OCI-LY7 (cell line): ENCODE measurements at regions of chr16 and their contacts with region 1.

Region 1: GRCh38 chr16:67561824-67562525 is 351 bp upstream of the CTCF start:
- DNase-seq: peak; percentile 98
- H3K4me3 ChIP-seq: peak overlapping the region; percentile 84
- H3K27ac ChIP-seq: peak overlapping the region; percentile 95
- H3K4me1 ChIP-seq: peaks cover 65% of the 10 kb centered on the region
- CTCF ChIP-seq: no peak

Region 2: DNA sequence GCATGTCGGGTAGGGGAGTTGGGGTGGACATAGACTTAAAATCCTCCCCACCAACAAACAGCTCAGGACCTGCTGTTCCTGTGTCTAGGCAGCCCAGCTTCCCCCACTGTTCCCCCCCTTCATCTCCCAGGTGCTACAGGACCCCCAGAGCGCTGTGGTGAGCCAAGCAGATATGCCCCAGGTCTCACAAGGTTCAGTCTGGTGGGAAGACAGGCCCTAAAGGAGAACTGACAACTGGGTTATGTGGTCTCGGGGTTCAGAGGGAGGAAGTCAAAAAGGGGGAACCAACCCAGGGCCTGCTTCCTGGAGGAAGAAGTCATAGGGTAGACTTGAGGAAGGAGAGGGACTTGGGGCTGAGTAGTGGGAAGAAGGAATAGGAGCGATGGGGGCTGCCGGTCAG is 30.8 kb before region 1 on chr16:
- CTCF ChIA-PET with region 1: no interaction called
- POLR2A ChIA-PET with region 1: interaction called, 13 read pairs
- intact Hi-C with region 1: no loop called
- DNase-seq: peak; percentile 33
- H3K4me3 ChIP-seq: no peak overlapping the region
- H3K27ac ChIP-seq: peak overlapping the region; percentile 34
- H3K4me1 ChIP-seq: peaks cover 50% of the 10 kb centered on the region
- CTCF ChIP-seq: no peak

Region 3: DNA sequence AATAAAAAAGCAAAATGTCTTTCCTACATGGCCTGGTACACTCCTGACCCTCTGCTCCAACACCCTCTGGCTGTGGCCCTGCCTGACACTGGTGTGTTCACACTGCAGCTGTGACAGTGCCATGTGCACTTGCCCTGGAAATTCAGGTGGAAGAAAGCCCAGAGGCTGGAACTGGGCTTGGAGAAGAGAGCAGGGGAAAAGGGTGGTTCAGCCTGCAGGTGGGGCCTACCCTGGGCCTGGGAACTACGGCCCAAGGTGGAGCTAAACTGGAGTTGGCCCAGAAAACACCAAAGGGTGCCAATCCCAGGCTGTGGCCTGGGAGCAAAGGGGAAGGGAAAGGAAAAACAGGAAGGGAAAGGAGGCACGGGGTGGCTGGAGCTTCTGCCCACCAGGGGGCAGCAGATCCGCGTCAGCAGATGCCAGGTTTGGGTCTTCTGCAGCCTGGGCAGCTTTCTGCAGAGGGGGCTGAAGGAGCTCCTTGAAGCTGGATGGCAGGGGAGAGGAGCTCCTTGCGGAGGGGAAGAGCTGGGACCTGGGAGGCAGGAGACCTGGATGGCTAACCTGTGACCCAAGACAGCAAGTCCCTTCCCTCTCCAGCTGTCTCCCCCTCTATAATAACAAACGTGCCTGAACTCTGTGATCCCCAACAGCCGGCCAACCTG is 15.1 kb before region 1 on chr16:
- CTCF ChIA-PET with region 1: interaction called, 42 read pairs
- POLR2A ChIA-PET with region 1: interaction called, 251 read pairs
- intact Hi-C with region 1: loop called (anchors 1 kb)
- DNase-seq: peak; percentile 90
- H3K4me3 ChIP-seq: peak overlapping the region; percentile 64
- H3K27ac ChIP-seq: peak overlapping the region; percentile 98
- H3K4me1 ChIP-seq: peaks cover 96% of the 10 kb centered on the region
- CTCF ChIP-seq: peak; percentile 97

Region 4: GRCh38 chr16:67641779-67642708 is 80.1 kb after region 1 on chr16:
- CTCF ChIA-PET with region 1: interaction called, 9 read pairs
- POLR2A ChIA-PET with region 1: interaction called, 6 read pairs
- intact Hi-C with region 1: loop called (anchors 1 kb)
- DNase-seq: no peak
- H3K4me3 ChIP-seq: no peak overlapping the region
- H3K27ac ChIP-seq: no peak overlapping the region
- H3K4me1 ChIP-seq: peaks cover 25% of the 10 kb centered on the region
- CTCF ChIP-seq: no peak

Region 5: DNA sequence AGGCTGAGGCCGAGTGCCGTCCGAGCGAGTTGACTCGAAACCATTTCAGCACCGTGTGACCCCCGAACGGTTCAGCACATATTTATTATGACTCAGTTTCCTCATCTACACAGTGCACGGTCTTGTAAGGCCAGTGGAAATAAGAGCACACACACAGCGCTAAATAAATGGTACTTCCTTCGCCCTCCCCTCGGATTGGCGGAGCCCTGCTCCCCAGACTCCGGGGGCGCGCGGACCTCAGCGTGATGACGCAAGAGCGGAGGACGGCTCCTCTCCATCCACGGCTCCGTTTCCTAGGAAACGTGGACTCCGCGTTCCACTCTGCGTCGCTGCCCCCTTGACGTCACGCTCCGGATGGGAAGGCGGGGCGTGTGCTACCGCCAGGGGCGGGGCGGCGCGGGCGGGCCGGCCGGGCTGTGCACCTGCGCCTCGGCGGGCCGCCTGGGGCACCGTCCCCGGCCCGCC is 98.6 kb after region 1 on chr16 and contains the start of gene PARD6A:
- CTCF ChIA-PET with region 1: no interaction called
- POLR2A ChIA-PET with region 1: interaction called, 7 read pairs
- intact Hi-C with region 1: loop called (anchors 1 kb)
- DNase-seq: peak; percentile 100
- H3K4me3 ChIP-seq: peak within 1 kb of the TSS; percentile 83
- H3K27ac ChIP-seq: peak within 1 kb of the TSS; percentile 81
- H3K4me1 ChIP-seq: peaks cover 15% of the 10 kb centered on the region
- CTCF ChIP-seq: no peak
- total RNA-seq, gene PARD6A: 12.3 and 23.3 TPM in 2 replicates

Region 6: GRCh38 chr16:67667817-67668494 is 106.0 kb after region 1 on chr16:
- CTCF ChIA-PET with region 1: interaction called, 6 read pairs
- POLR2A ChIA-PET with region 1: interaction called, 12 read pairs
- intact Hi-C with region 1: no loop called
- DNase-seq: peak; percentile 96
- H3K4me3 ChIP-seq: peak overlapping the region; percentile 69
- H3K27ac ChIP-seq: peak overlapping the region; percentile 80
- H3K4me1 ChIP-seq: peaks cover 38% of the 10 kb centered on the region
- CTCF ChIP-seq: peak; percentile 79

Region 7: GRCh38 chr16:68085259-68086071 is 523.5 kb after region 1 on chr16 and contains the start of gene NFATC3:
- CTCF ChIA-PET with region 1: no interaction called
- POLR2A ChIA-PET with region 1: no interaction called
- intact Hi-C with region 1: loop called (anchors 10 kb)
- DNase-seq: peak; percentile 98
- H3K4me3 ChIP-seq: peak within 1 kb of the TSS; percentile 91
- H3K27ac ChIP-seq: peak within 1 kb of the TSS; percentile 90
- H3K4me1 ChIP-seq: peaks cover 62% of the 10 kb centered on the region
- CTCF ChIP-seq: no peak
- total RNA-seq, gene NFATC3: 60.9 and 73.4 TPM in 2 replicates